ENCODE measurements at regions of chr21 and their contacts with region 1.

Region 1: DNA sequence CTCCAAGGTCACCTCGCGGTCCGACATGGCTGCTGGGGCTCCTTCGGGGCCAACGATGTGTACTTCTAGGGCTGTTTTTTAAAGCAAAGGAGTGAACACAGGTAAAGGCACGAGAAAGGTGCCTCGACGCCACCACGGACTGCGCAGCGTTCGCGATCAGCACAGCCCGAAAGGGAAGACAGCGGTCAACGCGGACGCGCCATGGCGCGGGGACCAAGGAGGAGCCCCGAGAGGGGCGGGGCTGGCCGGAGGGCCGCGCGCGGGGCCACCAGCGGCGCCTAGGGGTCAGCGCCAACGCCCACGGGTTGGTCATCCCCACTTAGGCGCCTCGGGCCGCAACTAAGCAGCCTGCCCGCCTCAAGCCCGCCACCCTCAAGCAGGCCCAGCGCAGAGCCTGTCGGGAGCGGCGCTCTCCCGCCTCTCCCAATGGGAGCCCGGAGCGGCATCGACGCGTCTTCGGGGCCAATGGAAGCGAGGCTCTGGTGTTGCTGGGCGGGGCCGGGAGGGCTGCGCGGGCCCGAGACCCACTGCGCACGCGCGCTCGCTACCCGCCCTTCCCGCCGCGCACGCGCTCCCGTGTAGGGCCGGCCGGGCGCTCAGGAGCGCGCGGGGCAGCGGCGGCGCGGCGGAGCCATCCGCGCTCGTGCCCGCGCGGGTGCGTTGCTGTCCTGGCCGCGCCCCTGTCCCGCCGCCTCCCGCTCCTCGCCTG is at the start of gene DIP2A:
- DNase-seq: peak; percentile 95
- ATAC-seq: peak; percentile 98
- H3K4me3 Mint-ChIP-seq: peak within 1 kb of the TSS; percentile 88
- H3K27ac Mint-ChIP-seq: peak within 1 kb of the TSS; percentile 88
- H3K4me1 Mint-ChIP-seq: peaks cover 25% of the 10 kb centered on the region
- H3K27me3 Mint-ChIP-seq: no peaks in the 10 kb centered on the region
- CTCF ChIP-seq: no peak
- total RNA-seq, gene DIP2A: 28.2 and 32.1 TPM in 2 replicates

Region 2: DNA sequence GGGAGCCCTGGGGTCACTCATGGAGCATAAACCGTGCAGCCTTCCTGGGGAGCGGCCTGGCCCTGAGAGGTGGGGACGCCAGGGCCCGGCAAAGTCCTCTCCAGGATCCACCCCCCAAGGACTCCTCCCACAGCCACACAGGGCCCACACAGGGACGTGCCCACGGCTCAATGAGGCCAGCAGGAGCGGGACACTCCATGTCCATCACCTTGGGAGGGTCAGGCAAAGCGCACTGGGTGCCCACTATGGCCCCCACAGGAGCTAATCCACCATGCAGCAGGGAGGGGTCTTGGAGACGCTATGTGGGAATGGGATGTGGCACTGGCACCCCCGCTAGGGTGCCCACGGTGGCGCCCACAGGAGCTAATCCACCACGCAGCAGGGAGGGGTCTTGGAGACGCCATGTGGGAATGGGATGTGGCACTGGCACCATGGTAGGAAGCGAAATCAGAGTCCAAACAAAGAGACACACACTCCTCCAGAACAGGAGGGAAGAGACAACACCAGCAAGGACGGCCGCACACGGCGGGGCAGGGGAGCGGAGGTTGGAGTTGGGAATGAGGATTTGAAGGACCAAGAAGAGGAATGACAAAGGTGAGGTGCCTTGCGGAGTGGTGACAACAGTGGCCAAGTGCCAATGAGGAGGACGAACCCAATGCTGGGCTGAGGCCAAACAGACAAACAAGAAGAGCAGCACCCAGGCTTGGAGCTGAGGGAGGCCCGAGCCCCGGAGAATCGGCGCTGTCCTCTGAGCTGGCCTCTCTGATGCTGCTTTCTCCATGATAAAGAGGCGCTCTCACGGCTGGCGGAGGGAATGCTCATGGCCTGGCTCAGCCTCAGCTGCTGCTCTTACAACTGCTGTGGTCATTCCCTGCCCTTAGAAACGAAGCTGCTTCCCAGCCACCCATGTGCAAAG is 898.1 kb before region 1 on chr21:
- CTCF ChIA-PET with region 1: no interaction called
- POLR2A ChIA-PET with region 1: no interaction called
- intact Hi-C with region 1: loop called (anchors 5 kb)
- DNase-seq: no peak
- ATAC-seq: no peak
- H3K4me3 Mint-ChIP-seq: no peak overlapping the region
- H3K27ac Mint-ChIP-seq: no peak overlapping the region
- H3K4me1 Mint-ChIP-seq: peaks cover 10% of the 10 kb centered on the region
- H3K27me3 Mint-ChIP-seq: peaks cover 14% of the 10 kb centered on the region
- CTCF ChIP-seq: no peak

Region 3: GRCh38 chr21:46184625-46185555 is 273.6 kb before region 1 on chr21:
- CTCF ChIA-PET with region 1: no interaction called
- POLR2A ChIA-PET with region 1: no interaction called
- intact Hi-C with region 1: loop called (anchors 1 kb)
- DNase-seq: peak; percentile 69
- ATAC-seq: peak; percentile 82
- H3K4me3 Mint-ChIP-seq: peak overlapping the region; percentile 89
- H3K27ac Mint-ChIP-seq: peak overlapping the region; percentile 85
- H3K4me1 Mint-ChIP-seq: peaks cover 5% of the 10 kb centered on the region
- H3K27me3 Mint-ChIP-seq: no peaks in the 10 kb centered on the region
- CTCF ChIP-seq: no peak

Region 4: GRCh38 chr21:46228345-46229051 is 230.0 kb before region 1 on chr21 and contains the start of gene LSS:
- CTCF ChIA-PET with region 1: no interaction called
- POLR2A ChIA-PET with region 1: no interaction called
- intact Hi-C with region 1: loop called (anchors 2 kb)
- DNase-seq: peak; percentile 96
- ATAC-seq: peak; percentile 93
- H3K4me3 Mint-ChIP-seq: peak within 1 kb of the TSS; percentile 99
- H3K27ac Mint-ChIP-seq: peak within 1 kb of the TSS; percentile 97
- H3K4me1 Mint-ChIP-seq: peaks cover 39% of the 10 kb centered on the region
- H3K27me3 Mint-ChIP-seq: no peaks in the 10 kb centered on the region
- CTCF ChIP-seq: no peak
- total RNA-seq, gene LSS: 76.3 and 99.0 TPM in 2 replicates

Region 5: DNA sequence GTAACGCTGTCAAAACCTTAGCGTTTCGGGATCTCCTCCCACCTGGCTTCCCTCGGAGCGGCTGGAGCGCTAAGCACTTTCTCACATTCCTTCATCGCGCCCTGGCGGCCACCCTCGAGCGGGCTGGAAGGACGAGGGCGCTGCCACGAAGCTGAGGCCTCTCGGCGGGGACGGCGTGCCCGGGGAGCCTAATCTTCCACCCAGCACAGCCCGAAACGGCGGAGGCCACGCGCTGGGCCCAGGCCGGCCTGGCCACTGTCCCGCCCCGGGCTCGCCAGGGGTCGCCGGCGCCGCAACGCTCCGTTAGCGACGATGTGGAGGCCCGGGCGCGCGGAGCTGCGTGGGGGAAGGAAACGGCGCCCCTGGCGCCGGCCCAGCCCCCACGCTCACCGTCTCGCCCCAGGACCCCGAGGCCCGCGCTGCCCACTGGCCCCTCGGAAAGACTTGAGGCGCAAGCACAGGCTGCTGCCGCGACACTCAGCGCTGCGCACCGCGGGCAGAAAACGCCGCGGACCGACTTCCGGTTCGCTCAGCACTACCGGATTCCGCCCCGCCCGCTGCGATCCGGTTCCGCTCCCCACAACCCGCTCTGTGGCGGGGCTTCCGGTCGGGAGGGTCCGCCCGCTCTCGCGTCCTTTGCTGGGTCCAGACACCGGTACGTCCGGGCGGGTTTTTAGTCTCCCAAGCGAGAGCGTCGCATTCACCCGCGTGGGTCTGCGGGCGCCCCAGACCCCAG is 172.5 kb before region 1 on chr21 and contains the start of gene YBEY:
- CTCF ChIA-PET with region 1: no interaction called
- POLR2A ChIA-PET with region 1: no interaction called
- intact Hi-C with region 1: loop called (anchors 1 kb)
- DNase-seq: peak; percentile 83
- ATAC-seq: peak; percentile 85
- H3K4me3 Mint-ChIP-seq: peak within 1 kb of the TSS; percentile 98
- H3K27ac Mint-ChIP-seq: peak within 1 kb of the TSS; percentile 98
- H3K4me1 Mint-ChIP-seq: peaks cover 49% of the 10 kb centered on the region
- H3K27me3 Mint-ChIP-seq: no peaks in the 10 kb centered on the region
- CTCF ChIP-seq: no peak
- total RNA-seq, gene YBEY: 11.8 and 13.7 TPM in 2 replicates

Region 6: GRCh38 chr21:46431884-46432488 is 26.5 kb before region 1 on chr21:
- CTCF ChIA-PET with region 1: no interaction called
- POLR2A ChIA-PET with region 1: no interaction called
- intact Hi-C with region 1: no loop called
- DNase-seq: no peak
- ATAC-seq: no peak
- H3K4me3 Mint-ChIP-seq: no peak overlapping the region
- H3K27ac Mint-ChIP-seq: no peak overlapping the region
- H3K4me1 Mint-ChIP-seq: peaks cover under 1% of the 10 kb centered on the region
- H3K27me3 Mint-ChIP-seq: no peaks in the 10 kb centered on the region
- CTCF ChIP-seq: no peak

Region 7: GRCh38 chr21:46500224-46500856 is 41.9 kb after region 1 on chr21:
- CTCF ChIA-PET with region 1: no interaction called
- POLR2A ChIA-PET with region 1: interaction called, 9 read pairs
- intact Hi-C with region 1: loop called (anchors 10 kb)
- DNase-seq: no peak
- ATAC-seq: no peak
- H3K4me3 Mint-ChIP-seq: no peak overlapping the region
- H3K27ac Mint-ChIP-seq: peak overlapping the region; percentile 21
- H3K4me1 Mint-ChIP-seq: peaks cover 31% of the 10 kb centered on the region
- H3K27me3 Mint-ChIP-seq: no peaks in the 10 kb centered on the region
- CTCF ChIP-seq: no peak

Region 8: GRCh38 chr21:46635324-46636172 is 177.1 kb after region 1 on chr21 and contains the start of gene PRMT2:
- CTCF ChIA-PET with region 1: no interaction called
- POLR2A ChIA-PET with region 1: interaction called, 4 read pairs
- intact Hi-C with region 1: loop called (anchors 1 kb)
- DNase-seq: peak; percentile 99
- ATAC-seq: peak; percentile 92
- H3K4me3 Mint-ChIP-seq: peak within 1 kb of the TSS; percentile 92
- H3K27ac Mint-ChIP-seq: peak within 1 kb of the TSS; percentile 90
- H3K4me1 Mint-ChIP-seq: peaks cover 44% of the 10 kb centered on the region
- H3K27me3 Mint-ChIP-seq: peaks cover 11% of the 10 kb centered on the region
- CTCF ChIP-seq: no peak
- total RNA-seq, gene PRMT2: 48.5 and 52.4 TPM in 2 replicates